ENCODE measurements at regions of chr14 and their contacts with region 1.

Region 1: DNA sequence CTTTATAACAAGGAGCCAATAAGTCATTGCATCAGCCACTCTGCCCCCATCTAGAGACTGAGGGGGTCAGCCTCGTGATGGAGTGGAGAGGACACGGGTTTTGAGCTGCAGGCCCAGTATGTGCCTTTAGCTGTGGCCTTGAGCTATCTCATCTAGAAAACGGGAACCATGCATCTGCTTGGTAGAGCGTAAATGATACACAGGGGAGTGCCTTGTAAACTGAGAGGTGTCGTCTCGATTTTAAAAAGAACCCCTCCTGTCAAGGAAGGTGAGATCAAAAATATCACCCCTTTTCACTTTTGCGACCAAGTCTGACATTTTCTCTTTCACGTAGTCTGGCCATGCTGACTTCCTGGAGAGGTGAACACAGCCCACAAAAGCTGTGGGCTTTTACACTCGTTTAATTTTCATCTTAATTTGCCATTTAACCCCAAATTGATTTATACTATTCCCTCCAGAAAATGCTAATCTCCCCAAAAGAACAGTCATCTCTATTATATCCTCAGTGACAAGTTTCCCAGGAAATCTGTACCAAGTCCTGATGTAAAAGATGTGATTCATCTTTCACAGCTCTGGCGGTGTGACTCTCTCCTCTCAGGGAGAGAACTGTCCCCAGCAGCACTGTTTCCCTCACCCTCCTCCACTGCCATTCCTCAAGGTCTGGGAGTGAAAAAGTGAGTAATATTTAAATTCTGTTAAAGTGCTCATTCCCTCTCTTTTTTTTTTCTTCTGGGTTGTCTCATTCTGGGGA is 30.6 kb downstream of the VCPKMT start:
- DNase-seq: peak; percentile 77
- H3K4me3 Mint-ChIP-seq: peak overlapping the region; percentile 6
- H3K27ac Mint-ChIP-seq: peak overlapping the region; percentile 83
- H3K4me1 Mint-ChIP-seq: peaks cover 93% of the 10 kb centered on the region
- H3K27me3 Mint-ChIP-seq: no peaks in the 10 kb centered on the region

Region 2: DNA sequence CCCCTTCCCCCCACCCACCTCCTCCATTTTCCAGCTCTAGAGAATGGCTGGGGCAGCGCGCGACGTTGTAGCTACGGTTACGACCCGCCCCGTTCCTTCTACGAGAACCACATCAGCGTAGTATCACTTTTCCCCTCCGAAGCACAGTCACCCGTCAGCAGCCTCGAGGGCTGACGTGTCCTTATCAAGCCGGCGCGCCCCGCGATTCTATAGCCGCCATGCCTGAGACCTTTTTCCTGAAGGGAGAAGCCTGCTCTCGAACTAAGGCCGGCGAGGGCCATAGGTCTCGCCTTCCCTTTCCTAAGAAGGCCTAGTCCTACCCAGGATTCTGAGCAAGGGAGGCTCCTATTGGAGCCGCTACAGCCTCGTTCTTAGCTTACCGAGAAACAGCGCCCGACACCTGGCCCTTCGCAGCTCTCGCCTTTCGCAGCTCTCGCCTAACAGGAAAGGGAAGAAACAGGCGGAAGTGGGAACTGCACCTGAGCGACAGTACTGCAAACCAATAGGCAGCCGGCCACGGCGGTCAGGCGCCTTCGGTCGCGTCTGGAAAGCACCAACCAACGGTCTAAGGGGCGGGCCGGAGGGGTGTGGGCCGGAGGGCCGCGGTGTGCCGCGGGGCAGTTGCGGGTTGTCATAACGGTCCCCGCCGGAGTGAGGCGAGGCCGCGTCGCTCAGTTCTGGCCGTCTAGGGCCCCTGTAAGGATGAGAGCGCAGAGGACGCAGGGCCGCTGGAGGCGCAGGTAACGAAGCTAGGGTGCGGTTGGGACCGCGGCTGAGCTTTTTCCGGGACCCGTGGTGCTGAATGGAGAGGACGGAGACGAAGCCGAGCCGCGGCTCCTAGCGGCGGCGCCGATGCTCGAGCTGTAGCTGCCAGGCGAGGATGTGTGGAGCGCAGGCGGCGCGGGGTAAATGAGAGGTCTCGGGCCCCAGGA is 465.3 kb before region 1 on chr14 and contains the starts of genes MGAT2 and RPL36AL:
- CTCF ChIA-PET with region 1: no interaction called
- intact Hi-C with region 1: loop called (anchors 1 kb)
- DNase-seq: peak; percentile 97
- H3K4me3 Mint-ChIP-seq: peak within 1 kb of the TSS; percentile 97
- H3K27ac Mint-ChIP-seq: peak within 1 kb of the TSS; percentile 97
- H3K4me1 Mint-ChIP-seq: peaks cover 52% of the 10 kb centered on the region
- H3K27me3 Mint-ChIP-seq: no peaks in the 10 kb centered on the region
- total RNA-seq, gene MGAT2: 20.6 to 20.7 TPM
- total RNA-seq, gene RPL36AL: 250 to 266 TPM

Region 3: GRCh38 chr14:49867831-49868723 is 217.7 kb before region 1 on chr14:
- CTCF ChIA-PET with region 1: interaction called, 28 read pairs
- intact Hi-C with region 1: loop called (anchors 1 kb)
- DNase-seq: peak; percentile 99
- H3K4me3 Mint-ChIP-seq: peak overlapping the region; percentile 92
- H3K27ac Mint-ChIP-seq: peak overlapping the region; percentile 94
- H3K4me1 Mint-ChIP-seq: peaks cover 20% of the 10 kb centered on the region
- H3K27me3 Mint-ChIP-seq: no peaks in the 10 kb centered on the region

Region 4: GRCh38 chr14:49946320-49947141 is 139.2 kb before region 1 on chr14:
- CTCF ChIA-PET with region 1: interaction called, 3 read pairs
- intact Hi-C with region 1: loop called (anchors 1 kb)
- DNase-seq: peak; percentile 51
- H3K4me3 Mint-ChIP-seq: peak overlapping the region; percentile 44
- H3K27ac Mint-ChIP-seq: peak overlapping the region; percentile 62
- H3K4me1 Mint-ChIP-seq: peaks cover 64% of the 10 kb centered on the region
- H3K27me3 Mint-ChIP-seq: no peaks in the 10 kb centered on the region

Region 5: DNA sequence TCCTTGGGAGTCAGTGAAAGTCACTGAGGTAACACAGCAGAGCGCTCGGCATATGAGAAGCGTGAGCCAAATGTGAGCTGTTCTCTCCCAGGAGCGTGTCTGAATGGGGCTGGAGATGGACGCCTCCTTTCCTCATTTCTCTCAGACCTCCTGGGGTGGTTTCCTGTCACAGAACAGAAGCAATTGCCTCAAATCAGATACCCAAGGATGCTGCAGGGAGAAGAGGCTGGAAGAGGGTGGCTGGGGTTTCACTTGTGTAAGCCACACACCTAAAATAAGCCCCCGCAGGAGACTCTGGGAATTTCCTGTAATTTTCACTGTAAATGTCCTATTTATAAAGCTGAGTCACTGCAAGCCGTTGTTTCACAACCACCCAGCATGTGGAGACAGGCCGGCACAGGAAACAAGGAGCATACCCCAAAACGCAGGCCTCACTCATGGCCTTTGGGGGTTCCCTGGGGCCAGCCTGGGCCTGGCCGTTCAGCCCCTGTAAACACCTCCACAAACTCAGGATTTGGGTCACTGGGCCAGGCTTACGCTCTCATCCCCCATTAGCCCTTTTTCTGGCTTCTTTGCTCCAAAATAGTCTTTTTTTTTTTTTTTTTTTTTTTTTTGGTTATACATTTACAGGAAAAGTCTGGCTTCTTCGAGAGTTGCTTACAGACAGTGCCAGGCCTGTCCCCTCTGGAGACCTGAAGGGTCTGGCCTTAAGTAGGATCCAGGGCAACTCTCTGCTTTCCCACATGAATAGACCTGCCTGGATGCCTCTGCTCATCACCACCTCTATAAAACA is 24.7 kb before region 1 on chr14:
- CTCF ChIA-PET with region 1: interaction called, 34 read pairs
- intact Hi-C with region 1: loop called (anchors 1 kb)
- DNase-seq: peak; percentile 64
- H3K4me3 Mint-ChIP-seq: peak overlapping the region; percentile 85
- H3K27ac Mint-ChIP-seq: peak overlapping the region; percentile 98
- H3K4me1 Mint-ChIP-seq: peaks cover 75% of the 10 kb centered on the region
- H3K27me3 Mint-ChIP-seq: no peaks in the 10 kb centered on the region

Region 6: DNA sequence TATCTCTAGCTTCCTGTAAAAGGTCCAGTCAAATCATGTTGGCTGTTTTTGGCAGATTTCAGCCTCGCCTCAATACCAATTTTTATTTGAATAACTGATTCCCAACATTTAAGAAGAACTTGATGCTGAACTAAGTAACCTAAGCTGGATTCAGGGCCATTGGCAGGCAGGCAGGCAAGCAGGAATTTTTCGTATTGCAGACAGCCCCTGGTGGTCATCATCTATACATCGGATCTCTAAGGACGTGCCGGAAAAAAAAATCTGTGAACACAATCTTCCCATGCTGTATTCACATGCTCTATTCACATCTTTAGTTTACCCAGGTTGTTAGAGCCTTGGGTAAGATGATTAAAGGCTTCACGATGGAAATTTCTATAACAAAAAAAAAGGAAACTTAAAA is 23.6 kb after region 1 on chr14:
- CTCF ChIA-PET with region 1: interaction called, 21 read pairs
- intact Hi-C with region 1: loop called (anchors 2 kb)
- DNase-seq: no peak
- H3K4me3 Mint-ChIP-seq: no peak overlapping the region
- H3K27ac Mint-ChIP-seq: peak overlapping the region; percentile 59
- H3K4me1 Mint-ChIP-seq: peaks cover 43% of the 10 kb centered on the region
- H3K27me3 Mint-ChIP-seq: no peaks in the 10 kb centered on the region

Region 7: GRCh38 chr14:50139192-50139591 is 53.4 kb after region 1 on chr14:
- CTCF ChIA-PET with region 1: no interaction called
- intact Hi-C with region 1: no loop called
- DNase-seq: no peak
- H3K4me3 Mint-ChIP-seq: no peak overlapping the region
- H3K27ac Mint-ChIP-seq: no peak overlapping the region
- H3K4me1 Mint-ChIP-seq: no peaks in the 10 kb centered on the region
- H3K27me3 Mint-ChIP-seq: no peaks in the 10 kb centered on the region

Measured in activated naive CD4-positive, alpha-beta T cell treated with anti-CD3 and anti-CD28 coated beads for 36 hours (primary cell).